Caco-2 (cell line): ENCODE measurements at regions of chr10 and their contacts with region 1.

Region 1: DNA sequence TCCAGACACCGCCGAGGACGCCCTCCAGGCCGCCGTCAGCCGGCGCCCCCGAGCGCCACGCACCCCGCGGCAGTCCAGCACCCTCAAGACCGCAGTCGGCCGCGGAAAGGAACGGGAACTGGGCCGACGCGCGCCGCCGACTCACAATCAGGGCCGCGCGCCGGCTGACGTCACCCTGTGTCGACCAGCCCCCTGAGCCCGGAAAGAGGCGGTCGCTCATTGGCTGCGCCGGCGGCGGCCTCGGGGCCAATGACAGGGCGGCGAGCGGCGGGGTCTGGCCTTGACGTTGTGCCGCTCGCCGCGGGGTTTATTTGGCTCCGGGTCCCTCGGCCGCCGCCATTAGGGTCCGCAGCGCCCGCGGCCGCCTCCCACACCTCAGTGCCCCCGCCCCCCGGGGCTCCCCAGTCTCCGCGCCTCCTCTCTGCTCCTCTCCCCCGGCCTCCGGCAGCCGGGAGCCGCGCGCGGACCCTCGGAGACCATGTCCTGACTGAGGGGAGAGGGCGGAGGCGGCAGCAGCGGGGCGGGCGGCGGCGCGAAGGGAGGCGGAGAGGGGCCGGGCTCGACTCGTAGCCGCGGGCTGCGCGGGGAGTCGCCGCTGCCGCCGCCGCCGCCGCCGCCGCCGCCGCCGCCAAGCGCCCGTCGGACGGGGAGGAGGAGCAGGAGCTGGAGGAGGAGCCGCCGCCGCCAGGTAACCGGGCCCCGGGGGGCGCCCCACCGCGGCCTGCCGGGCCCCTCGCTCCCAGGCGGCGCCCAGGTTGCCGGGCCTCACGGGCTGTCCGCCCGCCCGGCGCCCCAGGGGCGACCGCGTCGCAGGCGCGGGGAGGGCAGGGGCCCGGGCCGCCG is 25.1 kb upstream of the ZRANB1 start:
- DNase-seq: peak; percentile 96 to 98
- H3K4me3 ChIP-seq: peak overlapping the region; percentile 90
- H3K4me3 Mint-ChIP-seq: peak overlapping the region; percentile 91
- H3K27ac Mint-ChIP-seq: peak overlapping the region; percentile 99
- H3K4me1 ChIP-seq: peaks cover 6% of the 10 kb centered on the region; the same call in 1 of the 2 replicates
- H3K4me1 Mint-ChIP-seq: peaks cover 9% of the 10 kb centered on the region
- H3K27me3 ChIP-seq: no peaks in the 10 kb centered on the region
- H3K27me3 Mint-ChIP-seq: no peaks in the 10 kb centered on the region
- CTCF ChIP-seq: no peak

Region 2: DNA sequence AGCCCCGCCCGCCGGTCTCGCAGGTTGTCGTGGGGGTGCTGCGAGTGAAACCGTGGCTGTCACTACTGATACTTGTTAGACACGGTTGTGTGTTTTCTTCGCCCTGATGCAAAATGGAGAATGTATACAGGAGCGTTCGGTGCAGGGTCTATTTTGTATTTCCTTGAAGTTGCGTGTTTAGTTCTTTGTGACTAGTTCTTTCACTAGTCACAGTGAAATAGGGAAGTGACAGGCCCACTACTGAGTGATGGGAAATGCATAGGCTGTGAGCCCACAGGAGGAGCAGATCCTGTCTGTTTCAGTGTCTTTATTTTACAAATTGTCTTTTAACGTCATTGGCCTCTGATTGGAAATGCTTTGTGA is 114.5 kb before region 1 on chr10:
- CTCF ChIA-PET with region 1: no interaction called
- POLR2A ChIA-PET with region 1: interaction called, 12 read pairs
- intact Hi-C with region 1: loop called (anchors 5 kb)
- DNase-seq: no peak
- H3K4me3 ChIP-seq: peak overlapping the region; percentile 65
- H3K4me3 Mint-ChIP-seq: peak overlapping the region; percentile 95
- H3K27ac Mint-ChIP-seq: peak overlapping the region; percentile 86
- H3K4me1 ChIP-seq: no peaks in the 10 kb centered on the region; the same call in 1 of the 2 replicates
- H3K4me1 Mint-ChIP-seq: peaks cover 12% of the 10 kb centered on the region
- H3K27me3 ChIP-seq: no peaks in the 10 kb centered on the region
- H3K27me3 Mint-ChIP-seq: no peaks in the 10 kb centered on the region
- CTCF ChIP-seq: no peak

Region 3: GRCh38 chr10:124875596-124875995 is 41.2 kb before region 1 on chr10:
- CTCF ChIA-PET with region 1: no interaction called
- POLR2A ChIA-PET with region 1: no interaction called
- intact Hi-C with region 1: loop called (anchors 5 kb)
- DNase-seq: no peak
- H3K4me3 ChIP-seq: no peak overlapping the region
- H3K4me3 Mint-ChIP-seq: no peak overlapping the region
- H3K27ac Mint-ChIP-seq: no peak overlapping the region
- H3K4me1 ChIP-seq: no peaks in the 10 kb centered on the region
- H3K4me1 Mint-ChIP-seq: no peaks in the 10 kb centered on the region
- H3K27me3 ChIP-seq: no peaks in the 10 kb centered on the region
- H3K27me3 Mint-ChIP-seq: peaks cover 3% of the 10 kb centered on the region
- CTCF ChIP-seq: no peak

Region 4: GRCh38 chr10:124953421-124953820 is 36.6 kb after region 1 on chr10:
- CTCF ChIA-PET with region 1: interaction called, 8 read pairs
- POLR2A ChIA-PET with region 1: interaction called, 10 read pairs
- intact Hi-C with region 1: no loop called
- DNase-seq: no peak
- H3K4me3 ChIP-seq: no peak overlapping the region
- H3K4me3 Mint-ChIP-seq: no peak overlapping the region
- H3K27ac Mint-ChIP-seq: peak overlapping the region; percentile 60
- H3K4me1 ChIP-seq: no peaks in the 10 kb centered on the region
- H3K4me1 Mint-ChIP-seq: peaks cover 7% of the 10 kb centered on the region
- H3K27me3 ChIP-seq: no peaks in the 10 kb centered on the region
- H3K27me3 Mint-ChIP-seq: no peaks in the 10 kb centered on the region
- CTCF ChIP-seq: no peak